Activated CD8-positive, alpha-beta T cell treated with anti-CD3 and anti-CD28 coated beads for 36 hours (primary cell): ENCODE measurements at regions of chr18 and their contacts with region 1.

Region 1: GRCh38 chr18:36015629-36016028 is 43.1 kb downstream of the RMP24 start:
- DNase-seq: no peak
- ATAC-seq: no peak
- H3K4me3 Mint-ChIP-seq: no peak overlapping the region
- H3K27ac Mint-ChIP-seq: no peak overlapping the region
- H3K4me1 Mint-ChIP-seq: no peaks in the 10 kb centered on the region
- H3K27me3 Mint-ChIP-seq: no peaks in the 10 kb centered on the region
- CTCF ChIP-seq: no peak

Region 2: GRCh38 chr18:36028859-36029258 is 13.2 kb after region 1 on chr18:
- CTCF ChIA-PET with region 1: interaction called, 28 read pairs
- POLR2A ChIA-PET with region 1: no interaction called
- intact Hi-C with region 1: no loop called
- DNase-seq: no peak
- ATAC-seq: no peak
- H3K4me3 Mint-ChIP-seq: no peak overlapping the region
- H3K27ac Mint-ChIP-seq: peak overlapping the region; percentile 4
- H3K4me1 Mint-ChIP-seq: peaks cover 10% of the 10 kb centered on the region
- H3K27me3 Mint-ChIP-seq: no peaks in the 10 kb centered on the region
- CTCF ChIP-seq: no peak

Region 3: DNA sequence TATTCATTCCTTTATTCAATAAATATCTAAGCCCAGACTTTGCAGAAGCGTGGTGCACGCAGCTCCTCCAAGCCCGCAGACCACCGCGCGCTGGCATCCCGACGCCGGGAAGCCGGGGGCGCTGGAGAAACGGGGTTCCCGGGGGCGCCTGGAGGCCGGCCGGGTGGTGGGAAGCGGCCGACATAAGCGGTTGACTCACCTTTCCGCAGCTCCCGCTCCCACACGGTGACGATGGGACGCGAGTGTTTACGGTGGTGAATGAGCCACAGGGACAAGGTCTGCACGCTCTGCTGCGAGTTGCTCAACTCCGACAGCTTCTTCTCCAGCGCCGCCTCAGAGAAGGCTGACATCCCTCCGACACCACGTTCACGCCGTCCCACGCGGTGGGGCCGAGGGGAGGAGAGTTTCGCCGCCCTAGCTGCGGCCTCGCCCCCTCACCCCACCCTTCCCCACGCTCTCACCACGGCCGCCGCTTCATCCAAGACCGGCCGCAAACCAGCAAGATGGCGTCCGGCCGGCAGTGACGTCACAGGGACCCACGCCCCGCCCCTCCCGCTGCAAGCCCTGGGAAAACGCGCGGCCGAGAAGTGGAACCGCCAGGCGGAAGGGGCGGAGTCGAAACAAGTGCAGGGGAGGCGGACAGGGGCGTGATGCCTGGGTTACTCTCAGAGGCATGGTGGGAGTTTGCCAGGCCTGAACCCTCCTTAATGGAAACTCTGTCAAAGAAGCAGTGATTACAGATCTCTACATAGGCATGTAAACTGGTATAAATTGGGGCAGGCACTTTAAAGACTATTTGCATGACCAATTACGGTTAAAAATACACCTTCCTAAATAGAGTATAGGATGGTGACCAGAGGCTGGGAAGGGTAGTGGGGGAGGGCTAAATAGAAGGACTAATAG is 51.7 kb after region 1 on chr18 and contains the start of gene RPRD1A:
- CTCF ChIA-PET with region 1: interaction called, 3 read pairs
- POLR2A ChIA-PET with region 1: no interaction called
- intact Hi-C with region 1: loop called (anchors 5 kb)
- DNase-seq: peak; percentile 99
- ATAC-seq: peak; percentile 97
- H3K4me3 Mint-ChIP-seq: peak within 1 kb of the TSS; percentile 92
- H3K27ac Mint-ChIP-seq: peak within 1 kb of the TSS; percentile 95
- H3K4me1 Mint-ChIP-seq: peaks cover 34% of the 10 kb centered on the region
- H3K27me3 Mint-ChIP-seq: peaks cover 1% of the 10 kb centered on the region
- CTCF ChIP-seq: no peak
- total RNA-seq, gene RPRD1A: 29.4 to 31.9 TPM

Region 4: GRCh38 chr18:36095936-36096519 is 80.4 kb after region 1 on chr18:
- CTCF ChIA-PET with region 1: interaction called, 24 read pairs
- POLR2A ChIA-PET with region 1: no interaction called
- intact Hi-C with region 1: loop called (anchors 5 kb)
- DNase-seq: no peak
- ATAC-seq: peak; percentile 42
- H3K4me3 Mint-ChIP-seq: no peak overlapping the region
- H3K27ac Mint-ChIP-seq: no peak overlapping the region
- H3K4me1 Mint-ChIP-seq: peaks cover 7% of the 10 kb centered on the region
- H3K27me3 Mint-ChIP-seq: peaks cover 1% of the 10 kb centered on the region
- CTCF ChIP-seq: peak; percentile 80

Region 5: DNA sequence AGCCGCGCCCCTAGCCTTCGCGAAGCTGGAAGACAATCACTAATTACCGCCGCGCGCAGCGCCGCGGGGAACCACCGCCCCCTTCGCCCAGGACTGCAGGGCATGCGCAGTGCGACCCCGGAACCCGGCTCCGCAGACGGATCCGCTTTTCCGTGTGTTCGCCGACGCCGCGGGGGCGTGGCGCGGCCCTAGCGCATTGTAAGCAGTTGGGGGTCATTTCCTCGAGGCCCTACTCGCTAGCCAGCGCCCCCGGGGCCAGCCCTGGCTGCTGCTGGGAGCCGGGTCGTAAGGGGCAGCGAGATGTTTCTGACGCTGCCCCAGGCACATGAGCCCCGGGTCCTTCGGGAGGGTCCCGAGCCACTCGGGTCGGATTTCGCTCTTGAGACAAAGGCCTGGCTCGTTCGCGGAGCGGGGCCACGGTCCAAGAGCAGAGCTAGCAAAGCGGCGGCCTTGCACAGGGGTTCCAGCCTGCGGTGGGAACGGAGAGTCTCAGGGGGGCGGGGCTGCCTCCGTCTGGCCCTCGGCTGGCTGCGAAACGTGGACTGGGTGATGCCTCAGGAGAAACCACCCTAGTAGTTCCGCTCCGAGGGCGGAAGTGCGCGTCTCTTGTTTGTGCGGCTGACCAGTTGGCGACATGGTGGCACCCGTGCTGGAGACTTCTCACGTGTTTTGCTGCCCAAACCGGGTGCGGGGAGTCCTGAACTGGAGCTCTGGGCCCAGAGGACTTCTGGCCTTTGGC is 113.8 kb after region 1 on chr18 and contains the starts of genes ELP2 and SLC39A6:
- CTCF ChIA-PET with region 1: interaction called, 10 read pairs
- POLR2A ChIA-PET with region 1: interaction called, 5 read pairs
- intact Hi-C with region 1: loop called (anchors 10 kb)
- DNase-seq: peak; percentile 96
- ATAC-seq: peak; percentile 92
- H3K4me3 Mint-ChIP-seq: peak within 1 kb of the TSS; percentile 93
- H3K27ac Mint-ChIP-seq: peak within 1 kb of the TSS; percentile 95
- H3K4me1 Mint-ChIP-seq: peaks cover 56% of the 10 kb centered on the region
- H3K27me3 Mint-ChIP-seq: no peaks in the 10 kb centered on the region
- CTCF ChIP-seq: no peak
- total RNA-seq, gene ELP2: 98.8 to 105 TPM
- total RNA-seq, gene SLC39A6: 20.6 to 20.8 TPM

Region 6: GRCh38 chr18:36284671-36285295 is 269.2 kb after region 1 on chr18:
- CTCF ChIA-PET with region 1: interaction called, 49 read pairs
- POLR2A ChIA-PET with region 1: no interaction called
- intact Hi-C with region 1: loop called (anchors 5 kb)
- DNase-seq: peak; percentile 57
- ATAC-seq: peak; percentile 74
- H3K4me3 Mint-ChIP-seq: no peak overlapping the region
- H3K27ac Mint-ChIP-seq: no peak overlapping the region
- H3K4me1 Mint-ChIP-seq: no peaks in the 10 kb centered on the region
- H3K27me3 Mint-ChIP-seq: peaks cover 15% of the 10 kb centered on the region
- CTCF ChIP-seq: peak; percentile 79